ENCODE measurements at regions of chr11 and their contacts with region 1.

Region 1: DNA sequence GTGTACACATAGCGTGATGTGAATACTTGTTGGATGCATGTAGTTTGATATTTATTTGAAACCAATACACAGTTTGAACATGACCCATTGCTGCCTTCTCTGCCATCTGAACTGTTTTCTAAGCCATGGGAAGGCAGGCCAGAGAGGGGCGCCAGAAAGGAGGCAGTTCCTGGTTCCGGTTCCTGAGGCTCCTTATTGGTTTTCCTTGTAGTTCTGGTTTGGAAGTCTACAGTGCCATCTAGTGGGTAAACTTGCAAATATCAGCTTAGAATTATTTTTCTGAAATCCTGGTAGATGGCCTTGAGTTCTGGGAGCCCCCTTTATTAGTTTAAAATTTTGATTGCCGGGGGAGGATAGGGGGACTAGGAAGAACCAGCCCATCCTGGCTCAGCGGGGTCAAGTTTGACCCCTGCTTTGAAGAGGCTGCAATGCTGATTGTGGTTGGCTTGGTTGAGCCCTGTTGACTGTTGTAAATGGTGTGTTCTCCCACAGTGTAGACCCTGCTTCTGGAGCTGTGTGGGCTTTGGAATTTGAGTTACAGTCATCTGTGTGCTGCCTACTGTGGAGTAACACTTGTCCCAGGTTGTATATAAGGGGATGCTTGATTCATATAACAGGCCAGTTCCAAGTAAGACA is 48.4 kb downstream of the GRAMD1B start:
- DNase-seq: peak; percentile 89
- ATAC-seq: peak; percentile 29
- H3K4me3 ChIP-seq: no peak overlapping the region
- H3K27ac ChIP-seq: peak overlapping the region; percentile 66
- H3K4me1 ChIP-seq: peaks cover 42% of the 10 kb centered on the region
- H3K27me3 ChIP-seq: no peaks in the 10 kb centered on the region
- CTCF ChIP-seq: peak; percentile 95

Region 2: DNA sequence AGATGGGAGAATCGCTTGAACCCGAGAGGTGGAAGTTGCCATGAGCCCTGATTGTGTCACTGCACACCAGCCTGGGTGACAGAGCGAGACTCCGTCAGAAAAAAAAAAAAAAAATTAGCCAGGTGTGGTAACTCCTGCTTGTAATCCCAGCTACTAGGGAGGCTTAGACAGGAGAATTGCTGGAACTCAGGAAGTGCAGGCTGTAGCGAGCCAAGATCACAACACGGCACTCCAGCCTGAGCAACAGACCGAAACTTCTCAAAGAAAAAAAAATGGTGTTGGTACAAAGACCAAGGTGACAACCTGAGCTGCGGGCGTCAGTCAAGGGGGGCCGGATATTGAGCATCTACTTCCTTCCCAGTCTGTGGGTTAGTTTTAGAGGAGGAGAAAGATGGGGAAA is 368.1 kb before region 1 on chr11:
- CTCF ChIA-PET with region 1: no interaction called
- POLR2A ChIA-PET with region 1: no interaction called
- intact Hi-C with region 1: loop called (anchors 1 kb)
- DNase-seq: no peak
- ATAC-seq: no peak
- H3K4me3 ChIP-seq: no peak overlapping the region
- H3K27ac ChIP-seq: no peak overlapping the region
- H3K4me1 ChIP-seq: peaks cover 7% of the 10 kb centered on the region
- H3K27me3 ChIP-seq: no peaks in the 10 kb centered on the region
- CTCF ChIP-seq: no peak

Region 3: DNA sequence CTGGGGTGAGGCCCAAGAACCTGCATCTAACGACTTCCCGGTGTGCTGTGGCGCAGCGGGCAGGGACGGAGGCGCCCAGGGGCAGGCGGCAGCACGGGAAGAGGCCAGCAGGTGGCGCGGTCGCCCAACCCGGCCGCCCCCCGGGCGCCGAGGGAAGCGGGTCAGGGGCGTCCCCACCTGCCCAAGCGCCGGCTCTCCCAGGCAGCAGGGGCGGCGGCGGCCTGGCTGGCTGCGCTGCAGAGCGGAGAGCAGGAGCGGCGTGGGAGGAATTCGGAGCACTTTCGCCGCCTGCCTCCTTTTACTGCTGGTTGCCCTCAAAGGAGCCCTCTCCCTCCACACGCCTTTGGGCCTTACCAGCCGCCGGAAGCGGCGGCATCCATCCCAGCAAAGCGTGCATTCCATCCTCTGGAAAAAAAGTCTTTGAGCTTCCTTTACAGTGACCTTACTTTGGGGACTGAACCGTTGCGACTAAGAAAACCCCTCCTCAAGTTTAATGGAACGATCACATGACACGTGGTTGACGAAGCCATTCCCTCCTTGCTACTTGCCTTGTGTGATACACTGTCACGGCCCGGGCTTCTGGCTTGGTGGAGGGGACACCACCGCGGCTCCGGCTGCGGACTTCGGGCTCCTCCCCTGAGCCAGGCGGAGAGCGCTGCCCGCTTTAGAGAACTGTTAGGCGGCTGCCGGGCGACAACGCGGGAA is 176.6 kb before region 1 on chr11:
- CTCF ChIA-PET with region 1: interaction called, 3 read pairs
- POLR2A ChIA-PET with region 1: no interaction called
- intact Hi-C with region 1: loop called (anchors 1 kb)
- DNase-seq: peak; percentile 72
- ATAC-seq: peak; percentile 79
- H3K4me3 ChIP-seq: peak overlapping the region; percentile 55
- H3K27ac ChIP-seq: no peak overlapping the region; the same call in 1 of the 2 replicates
- H3K4me1 ChIP-seq: peaks cover 29% of the 10 kb centered on the region
- H3K27me3 ChIP-seq: no peaks in the 10 kb centered on the region
- CTCF ChIP-seq: peak; percentile 95

Region 4: DNA sequence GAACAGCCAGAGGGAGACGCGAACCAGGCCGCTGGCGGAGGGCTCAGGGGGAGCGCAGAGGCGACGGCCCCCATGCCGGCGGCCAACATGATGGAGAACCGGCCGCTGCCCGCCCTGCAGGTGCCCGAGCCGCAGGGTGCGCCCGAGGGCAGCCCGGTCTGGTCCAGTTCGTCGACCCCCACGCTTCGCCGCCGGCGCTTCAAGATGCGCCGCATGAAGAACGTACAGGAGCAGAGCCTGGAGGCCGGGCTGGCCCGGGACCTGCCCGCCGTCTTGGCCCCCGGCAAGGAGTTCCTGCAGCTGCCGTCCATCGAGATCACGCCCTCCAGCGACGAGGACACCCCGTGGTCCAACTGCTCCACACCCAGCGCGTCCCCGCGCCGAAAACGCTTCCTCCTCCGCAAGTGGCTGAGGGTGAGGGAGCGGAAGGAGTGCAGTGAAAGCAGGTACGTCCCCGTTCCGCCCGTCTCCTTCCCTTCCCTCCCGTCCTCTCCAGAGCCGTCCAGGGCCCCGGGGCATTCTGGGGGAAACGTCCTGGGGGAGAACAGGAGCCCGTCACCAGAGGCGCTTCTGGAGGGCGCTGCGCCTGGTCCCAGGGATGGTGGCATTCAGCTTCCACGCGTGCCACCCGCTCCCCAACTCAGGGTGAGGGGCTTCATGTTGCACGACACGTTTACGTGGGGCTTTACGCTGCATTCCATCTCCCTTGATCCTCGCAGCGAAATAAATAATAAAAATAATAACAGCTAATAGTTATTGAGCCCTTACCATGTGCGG is 47.6 kb before region 1 on chr11:
- CTCF ChIA-PET with region 1: no interaction called
- POLR2A ChIA-PET with region 1: no interaction called
- intact Hi-C with region 1: loop called (anchors 1 kb)
- DNase-seq: peak; percentile 72
- ATAC-seq: peak; percentile 36
- H3K4me3 ChIP-seq: peak overlapping the region; percentile 88
- H3K27ac ChIP-seq: peak overlapping the region; percentile 91
- H3K4me1 ChIP-seq: peaks cover 48% of the 10 kb centered on the region
- H3K27me3 ChIP-seq: no peaks in the 10 kb centered on the region
- CTCF ChIP-seq: no peak; the same call in 1 of the 2 replicates

Region 5: DNA sequence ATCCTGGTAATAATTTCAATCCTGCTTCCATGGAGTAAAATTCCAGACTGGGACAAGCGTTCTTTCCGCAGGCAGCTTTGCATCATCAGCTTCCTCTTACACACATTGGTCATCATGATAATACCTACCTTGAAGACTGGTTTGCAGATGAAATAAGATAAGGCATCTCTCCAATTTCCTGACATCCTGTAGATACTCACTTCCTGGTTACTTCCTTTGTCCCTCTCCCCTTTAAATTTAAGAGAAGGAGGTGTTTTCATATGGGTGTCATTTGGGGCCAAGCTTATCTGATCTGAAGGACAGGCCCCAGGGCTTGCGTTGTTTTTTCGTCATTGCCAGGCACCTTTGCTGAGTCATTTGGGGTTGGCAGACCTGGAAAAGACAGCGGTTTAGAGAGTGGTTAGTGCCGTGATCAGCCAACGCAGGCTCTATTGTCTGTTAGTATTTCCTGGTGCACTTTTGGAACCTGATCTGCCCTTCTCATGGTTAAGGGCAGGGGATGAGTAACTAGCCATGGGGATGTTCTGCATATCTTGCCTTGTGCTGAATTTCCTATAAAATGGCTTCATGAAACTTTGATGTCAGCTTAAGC is 24.3 kb before region 1 on chr11:
- CTCF ChIA-PET with region 1: interaction called, 3 read pairs
- POLR2A ChIA-PET with region 1: interaction called, 9 read pairs
- intact Hi-C with region 1: loop called (anchors 1 kb)
- DNase-seq: peak; percentile 99
- ATAC-seq: peak; percentile 80
- H3K4me3 ChIP-seq: peak overlapping the region; percentile 47
- H3K27ac ChIP-seq: peak overlapping the region; percentile 98
- H3K4me1 ChIP-seq: peaks cover 73% of the 10 kb centered on the region
- H3K27me3 ChIP-seq: no peaks in the 10 kb centered on the region
- CTCF ChIP-seq: no peak

Region 6: DNA sequence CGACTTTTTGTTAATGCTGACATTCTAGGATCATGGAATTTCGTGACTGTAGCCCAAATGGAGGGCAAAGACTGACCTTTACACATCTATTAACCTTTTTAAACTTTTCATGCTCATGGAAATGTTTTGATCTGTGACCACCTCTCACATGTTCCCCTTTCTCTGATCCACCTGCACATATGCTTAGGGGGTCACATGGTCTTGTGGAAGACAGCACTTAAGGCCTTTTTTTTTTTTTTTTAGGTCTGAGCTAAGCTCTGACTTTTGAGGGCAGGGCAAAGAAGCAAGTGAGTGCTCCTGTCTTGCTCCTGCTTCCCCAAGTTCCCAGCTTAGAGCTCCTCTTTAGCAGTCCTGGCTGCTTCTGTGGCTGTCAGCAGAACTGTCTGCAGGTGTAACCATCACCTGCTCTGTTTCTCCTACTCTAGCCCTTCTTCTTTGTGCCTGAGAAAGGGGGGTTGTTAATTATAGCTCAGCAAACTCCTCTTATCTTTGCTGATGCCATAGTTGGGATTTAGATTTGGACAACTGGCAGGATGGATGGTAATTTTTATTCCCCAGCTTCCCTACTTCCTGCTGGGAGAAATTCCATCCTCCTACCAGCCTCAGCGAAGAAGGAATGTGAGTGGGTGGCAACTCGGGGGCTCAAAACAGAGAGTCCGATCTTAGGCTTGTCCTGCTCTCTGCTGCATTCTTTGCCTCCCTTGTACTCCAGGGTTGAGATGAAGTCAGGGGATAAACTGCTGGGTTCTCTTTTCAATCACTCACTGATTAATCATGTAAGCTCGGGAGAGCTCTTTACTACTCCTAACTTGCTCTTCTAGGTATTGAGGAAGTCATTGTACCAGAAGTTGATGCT is 16.0 kb after region 1 on chr11:
- CTCF ChIA-PET with region 1: no interaction called
- POLR2A ChIA-PET with region 1: no interaction called
- intact Hi-C with region 1: no loop called
- DNase-seq: no peak
- ATAC-seq: no peak
- H3K4me3 ChIP-seq: no peak overlapping the region
- H3K27ac ChIP-seq: no peak overlapping the region
- H3K4me1 ChIP-seq: peaks cover 11% of the 10 kb centered on the region
- H3K27me3 ChIP-seq: no peaks in the 10 kb centered on the region
- CTCF ChIP-seq: no peak

Region 7: GRCh38 chr11:123525511-123525918 is 47.0 kb after region 1 on chr11:
- CTCF ChIA-PET with region 1: no interaction called
- POLR2A ChIA-PET with region 1: no interaction called
- intact Hi-C with region 1: no loop called
- DNase-seq: no peak
- ATAC-seq: no peak
- H3K4me3 ChIP-seq: no peak overlapping the region
- H3K27ac ChIP-seq: no peak overlapping the region
- H3K4me1 ChIP-seq: no peaks in the 10 kb centered on the region
- H3K27me3 ChIP-seq: no peaks in the 10 kb centered on the region
- CTCF ChIP-seq: no peak

Measured in PC-3 (cell line).